CD8-positive, alpha-beta T cell (primary cell): ENCODE measurements at regions of chr22 and their contacts with region 1.

Region 1: GRCh38 chr22:36775964-36776669 is at the start of gene IFT27:
- DNase-seq: peak; percentile 89 to 100 (median 95)
- ATAC-seq: peak; percentile 84
- H3K4me3 ChIP-seq: peak within 1 kb of the TSS; percentile 72 to 73
- H3K4me3 Mint-ChIP-seq: peak within 1 kb of the TSS; percentile 93
- H3K27ac ChIP-seq: peak within 1 kb of the TSS; percentile 89 to 92
- H3K27ac Mint-ChIP-seq: peak within 1 kb of the TSS; percentile 94
- H3K4me1 ChIP-seq: peaks cover 14% of the 10 kb centered on the region
- H3K4me1 Mint-ChIP-seq: peaks cover 29% of the 10 kb centered on the region
- H3K27me3 ChIP-seq: no peaks in the 10 kb centered on the region
- H3K27me3 Mint-ChIP-seq: no peaks in the 10 kb centered on the region
- CTCF ChIP-seq: no peak
- total RNA-seq, gene IFT27: 9.2 to 9.9 TPM

Region 2: DNA sequence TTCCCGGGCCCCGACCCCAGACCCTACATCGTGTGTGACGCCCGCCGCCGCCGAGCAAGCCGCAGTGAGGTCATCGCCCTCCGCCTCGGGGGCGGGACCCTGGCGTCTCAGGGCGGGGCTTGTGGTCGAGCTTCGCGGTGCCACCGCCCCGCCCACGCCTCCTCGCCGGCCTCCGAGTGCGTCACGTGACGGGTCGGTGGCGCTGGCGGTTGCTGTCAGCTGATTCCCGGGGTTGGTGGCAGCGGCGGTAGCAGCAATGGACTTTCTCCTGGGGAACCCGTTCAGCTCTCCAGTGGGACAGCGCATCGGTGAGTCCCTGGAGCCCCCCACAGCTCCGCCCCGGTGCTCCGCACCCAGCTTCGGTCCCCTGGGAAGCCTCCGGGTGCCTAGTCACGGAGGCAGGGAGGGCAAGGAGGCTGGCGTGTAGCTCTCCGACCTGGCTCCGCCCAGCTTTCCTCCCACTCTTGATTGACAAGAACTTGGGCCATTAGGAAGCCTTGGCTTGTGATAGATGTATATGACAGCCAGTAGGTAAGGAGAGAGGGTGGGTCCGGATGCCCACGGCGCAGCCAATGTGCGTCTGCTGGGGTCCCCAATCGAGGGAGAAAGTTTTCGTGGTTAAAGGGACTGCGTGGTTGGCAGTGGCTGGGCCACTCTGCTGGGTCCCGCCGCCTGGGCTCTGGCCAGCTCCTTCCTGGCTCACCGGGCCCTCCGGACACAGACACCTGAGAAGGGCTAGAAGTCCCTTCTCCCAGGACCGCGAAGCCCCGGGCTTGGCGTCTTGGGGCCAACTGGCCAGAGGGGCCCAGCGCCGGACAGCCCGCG is 1476.2 kb before region 1 on chr22 and contains the start of gene TOM1:
- CTCF ChIA-PET with region 1: no interaction called
- POLR2A ChIA-PET with region 1: no interaction called
- intact Hi-C with region 1: loop called in 1 of 2 experiments (anchors 5 kb)
- DNase-seq: peak; percentile 95 to 99 (median 98)
- ATAC-seq: peak; percentile 83
- H3K4me3 ChIP-seq: peak within 1 kb of the TSS; percentile 75 to 86
- H3K4me3 Mint-ChIP-seq: peak within 1 kb of the TSS; percentile 94
- H3K27ac ChIP-seq: peak within 1 kb of the TSS; percentile 92 to 93
- H3K27ac Mint-ChIP-seq: peak within 1 kb of the TSS; percentile 99
- H3K4me1 ChIP-seq: peaks cover 13% of the 10 kb centered on the region
- H3K4me1 Mint-ChIP-seq: peaks cover 35% of the 10 kb centered on the region
- H3K27me3 ChIP-seq: no peaks in the 10 kb centered on the region
- H3K27me3 Mint-ChIP-seq: no peaks in the 10 kb centered on the region
- CTCF ChIP-seq: no peak
- total RNA-seq, gene TOM1: 166 to 170 TPM

Region 3: GRCh38 chr22:36734171-36735058 is 41.7 kb before region 1 on chr22:
- CTCF ChIA-PET with region 1: no interaction called
- POLR2A ChIA-PET with region 1: no interaction called
- intact Hi-C with region 1: no loop called
- DNase-seq: peak in 1 of 9 experiments; percentile 42
- ATAC-seq: no peak
- H3K4me3 ChIP-seq: no peak overlapping the region
- H3K4me3 Mint-ChIP-seq: no peak overlapping the region
- H3K27ac ChIP-seq: no peak overlapping the region
- H3K27ac Mint-ChIP-seq: no peak overlapping the region
- H3K4me1 ChIP-seq: no peaks in the 10 kb centered on the region
- H3K4me1 Mint-ChIP-seq: no peaks in the 10 kb centered on the region
- H3K27me3 ChIP-seq: peaks cover 0 to 3% of the 10 kb centered on the region in 2 experiments
- H3K27me3 Mint-ChIP-seq: peaks cover 49% of the 10 kb centered on the region
- CTCF ChIP-seq: no peak

Region 4: DNA sequence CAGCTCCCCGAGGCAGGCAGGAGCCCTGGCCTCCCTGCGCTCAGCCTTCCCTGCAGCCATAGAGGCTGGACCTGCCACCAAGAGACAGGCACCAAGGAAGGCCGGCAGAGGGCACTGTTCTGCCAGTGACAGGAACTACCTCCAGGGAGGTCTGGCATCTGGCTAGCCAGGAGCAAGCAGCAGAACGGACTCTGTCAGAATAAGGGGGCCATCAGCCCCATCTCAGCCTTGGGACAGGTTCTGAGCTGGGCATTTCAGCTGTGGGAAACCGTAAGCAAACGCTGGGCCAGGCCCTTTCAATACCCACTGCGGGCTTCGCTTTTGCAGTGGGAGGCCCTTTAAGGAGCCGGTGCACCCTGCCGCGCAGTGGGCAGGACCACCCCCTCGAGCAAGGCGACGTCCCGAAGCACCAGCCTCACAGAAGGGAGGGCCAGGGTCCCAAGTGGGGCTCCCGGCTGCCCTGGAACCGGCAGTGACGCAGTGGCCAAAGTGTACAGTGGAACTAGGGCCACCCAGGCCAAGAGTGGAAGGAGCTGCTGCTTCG is 18.4 kb before region 1 on chr22:
- CTCF ChIA-PET with region 1: interaction called, 46 read pairs
- POLR2A ChIA-PET with region 1: interaction called, 6 read pairs
- intact Hi-C with region 1: no loop called
- DNase-seq: peak; percentile 49 to 82 (median 73)
- ATAC-seq: peak; percentile 67
- H3K4me3 ChIP-seq: no peak overlapping the region
- H3K4me3 Mint-ChIP-seq: no peak overlapping the region
- H3K27ac ChIP-seq: no peak overlapping the region
- H3K27ac Mint-ChIP-seq: no peak overlapping the region
- H3K4me1 ChIP-seq: peaks cover 4% of the 10 kb centered on the region
- H3K4me1 Mint-ChIP-seq: no peaks in the 10 kb centered on the region
- H3K27me3 ChIP-seq: no peaks in the 10 kb centered on the region
- H3K27me3 Mint-ChIP-seq: peaks cover 13% of the 10 kb centered on the region
- CTCF ChIP-seq: peak; percentile 78

Region 5: DNA sequence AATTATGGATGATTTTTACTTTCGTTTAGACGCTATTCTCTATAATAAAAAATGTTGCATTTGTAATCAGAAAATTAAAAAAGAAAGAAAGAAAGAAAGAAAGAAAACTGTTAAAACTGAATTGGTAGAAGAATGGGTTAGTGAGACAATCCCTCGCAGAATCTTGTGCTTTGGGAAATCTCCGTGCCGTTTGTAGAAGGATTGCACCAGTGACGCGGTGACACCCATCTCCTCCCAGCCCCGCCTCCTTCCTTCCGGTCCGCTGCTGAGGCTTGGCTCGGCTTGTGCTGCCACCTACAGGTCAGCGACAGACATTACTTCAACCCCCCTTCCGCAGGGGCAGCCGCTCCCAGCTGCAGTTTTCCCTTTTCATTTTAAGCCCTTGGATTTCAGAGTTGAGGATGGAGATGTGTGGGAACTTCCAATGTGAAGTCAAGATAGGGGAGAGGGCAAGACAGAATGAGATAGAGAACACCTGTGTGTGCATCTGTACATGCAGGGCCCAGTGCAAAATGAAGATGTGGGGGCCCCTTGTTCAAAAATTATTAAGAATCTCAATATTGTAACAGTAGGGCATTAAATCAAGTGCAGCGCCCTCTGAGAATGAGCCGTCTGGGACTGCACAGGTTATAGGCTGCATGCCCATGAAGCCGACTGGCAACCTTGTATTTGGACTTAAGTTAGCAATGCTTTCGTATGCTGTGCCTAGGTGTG is 202.0 kb after region 1 on chr22:
- CTCF ChIA-PET with region 1: interaction called, 9 read pairs
- POLR2A ChIA-PET with region 1: interaction called, 13 read pairs
- intact Hi-C with region 1: no loop called
- DNase-seq: peak; percentile 78 to 95 (median 91)
- ATAC-seq: peak; percentile 90
- H3K4me3 ChIP-seq: peak overlapping the region; percentile 50 to 70
- H3K4me3 Mint-ChIP-seq: peak overlapping the region; percentile 97
- H3K27ac ChIP-seq: peak overlapping the region; percentile 64 to 70
- H3K27ac Mint-ChIP-seq: peak overlapping the region; percentile 95
- H3K4me1 ChIP-seq: peaks cover 4% of the 10 kb centered on the region
- H3K4me1 Mint-ChIP-seq: peaks cover 6% of the 10 kb centered on the region
- H3K27me3 ChIP-seq: no peaks in the 10 kb centered on the region
- H3K27me3 Mint-ChIP-seq: no peaks in the 10 kb centered on the region
- CTCF ChIP-seq: peak; percentile 69

Region 6: DNA sequence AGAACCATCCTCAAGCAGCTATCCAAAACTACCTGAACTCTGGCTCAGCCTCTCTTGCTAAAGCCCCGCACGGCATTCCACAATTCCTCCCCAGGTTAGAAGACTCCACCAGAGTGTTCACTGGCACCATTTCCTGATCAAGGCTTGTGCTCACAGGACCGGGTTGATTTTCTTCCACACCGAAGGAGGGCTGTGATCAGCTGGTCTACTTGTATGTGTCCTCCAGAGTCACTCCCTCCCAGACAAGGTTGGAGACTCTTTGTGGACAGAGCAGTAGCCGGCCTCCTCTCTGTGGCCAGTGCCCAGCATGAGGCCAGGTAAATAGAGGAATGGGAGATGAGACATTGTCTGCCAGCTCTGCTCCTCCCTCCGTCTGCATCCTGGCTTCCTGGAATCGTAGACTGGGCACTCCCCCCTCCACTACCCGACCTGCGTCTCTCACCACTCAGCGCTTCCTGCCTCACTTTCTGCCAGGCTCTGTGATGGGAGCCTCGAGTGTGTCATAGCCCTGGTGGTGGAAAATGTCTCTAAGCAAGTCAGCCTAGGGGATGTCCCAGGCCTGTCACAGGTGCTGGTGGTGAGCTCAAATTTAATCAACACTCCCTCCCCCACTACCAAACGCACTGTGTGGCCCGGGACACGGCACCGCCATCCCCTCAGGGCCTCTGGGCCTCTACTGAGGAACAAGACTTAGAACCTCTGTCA is 345.9 kb after region 1 on chr22:
- CTCF ChIA-PET with region 1: no interaction called
- POLR2A ChIA-PET with region 1: no interaction called
- intact Hi-C with region 1: loop called in 1 of 2 experiments (anchors 2 kb)
- DNase-seq: peak; percentile 81 to 99 (median 89)
- ATAC-seq: peak; percentile 95
- H3K4me3 ChIP-seq: peak overlapping the region; percentile 18 to 34
- H3K4me3 Mint-ChIP-seq: peak overlapping the region; percentile 71
- H3K27ac ChIP-seq: peak overlapping the region; percentile 93 to 98
- H3K27ac Mint-ChIP-seq: peak overlapping the region; percentile 99
- H3K4me1 ChIP-seq: peaks cover 36% of the 10 kb centered on the region
- H3K4me1 Mint-ChIP-seq: peaks cover 55% of the 10 kb centered on the region
- H3K27me3 ChIP-seq: no peaks in the 10 kb centered on the region
- H3K27me3 Mint-ChIP-seq: no peaks in the 10 kb centered on the region
- CTCF ChIP-seq: no peak

Region 7: DNA sequence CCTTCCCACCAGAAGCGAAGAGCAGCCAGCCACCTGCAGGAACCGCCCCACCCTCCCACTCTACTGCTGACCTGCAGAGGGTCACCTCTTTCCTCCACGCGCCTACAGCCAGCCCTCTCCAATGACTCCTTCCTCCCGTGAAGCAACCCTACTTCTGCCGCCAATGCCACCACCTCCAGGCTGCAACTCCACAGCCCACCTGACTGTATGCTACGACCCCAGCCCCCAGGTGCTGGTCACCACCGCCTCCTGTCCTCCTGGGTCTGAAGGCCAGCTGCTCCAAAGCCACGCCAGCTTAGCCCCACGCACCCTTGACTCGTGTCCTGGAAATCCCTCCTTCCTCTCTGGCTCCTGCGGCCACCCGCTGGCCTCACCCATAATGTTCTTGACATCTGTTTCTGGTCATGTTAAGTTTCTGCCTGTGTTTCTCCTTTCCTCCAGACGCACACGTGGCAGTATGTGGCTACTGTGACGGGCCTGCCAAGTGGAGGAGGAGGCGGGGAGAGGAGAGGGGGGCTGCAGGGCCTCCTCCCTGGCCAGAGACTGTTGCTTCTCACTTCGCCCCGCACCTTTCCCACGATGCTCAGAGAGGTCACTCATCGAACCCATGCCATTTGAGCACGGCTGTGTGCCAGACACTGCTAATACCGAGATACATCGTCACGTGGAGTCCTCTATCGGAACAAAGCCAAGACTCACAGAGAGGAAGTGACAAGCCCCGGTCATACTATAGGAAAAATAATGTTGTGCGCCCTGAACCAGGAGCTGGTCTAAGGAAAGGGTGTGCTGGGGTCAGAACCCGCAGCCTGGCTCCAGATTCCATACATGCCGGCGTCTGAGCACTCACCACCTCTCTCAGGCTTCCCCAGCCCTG is 400.3 kb after region 1 on chr22:
- CTCF ChIA-PET with region 1: no interaction called
- POLR2A ChIA-PET with region 1: no interaction called
- intact Hi-C with region 1: no loop called
- DNase-seq: peak in 1 of 9 experiments; percentile 39
- ATAC-seq: peak; percentile 51
- H3K4me3 ChIP-seq: no peak overlapping the region
- H3K4me3 Mint-ChIP-seq: peak overlapping the region; percentile 50
- H3K27ac ChIP-seq: no peak overlapping the region
- H3K27ac Mint-ChIP-seq: peak overlapping the region; percentile 77
- H3K4me1 ChIP-seq: peaks cover 16% of the 10 kb centered on the region
- H3K4me1 Mint-ChIP-seq: peaks cover 34% of the 10 kb centered on the region
- H3K27me3 ChIP-seq: no peaks in the 10 kb centered on the region
- H3K27me3 Mint-ChIP-seq: no peaks in the 10 kb centered on the region
- CTCF ChIP-seq: no peak